A549 (cell line): ENCODE measurements at regions of chr2 and their contacts with region 1.

Region 1: GRCh38 chr2:74440378-74441169 is 1.2 kb downstream of the RTKN start:
- DNase-seq: peak; percentile 85 to 100
- ATAC-seq: peak; percentile 96 to 99
- H3K4me3 ChIP-seq: peak overlapping the region; percentile 53
- H3K27ac ChIP-seq: peak overlapping the region; percentile 86 to 89
- H3K4me1 ChIP-seq: peaks cover 34% of the 10 kb centered on the region
- CTCF ChIP-seq: no peak
- EP300 ChIP-seq: no peak
- POLR2A ChIP-seq: peak; percentile 94
- RAD21 ChIP-seq: no peak

Region 2: DNA sequence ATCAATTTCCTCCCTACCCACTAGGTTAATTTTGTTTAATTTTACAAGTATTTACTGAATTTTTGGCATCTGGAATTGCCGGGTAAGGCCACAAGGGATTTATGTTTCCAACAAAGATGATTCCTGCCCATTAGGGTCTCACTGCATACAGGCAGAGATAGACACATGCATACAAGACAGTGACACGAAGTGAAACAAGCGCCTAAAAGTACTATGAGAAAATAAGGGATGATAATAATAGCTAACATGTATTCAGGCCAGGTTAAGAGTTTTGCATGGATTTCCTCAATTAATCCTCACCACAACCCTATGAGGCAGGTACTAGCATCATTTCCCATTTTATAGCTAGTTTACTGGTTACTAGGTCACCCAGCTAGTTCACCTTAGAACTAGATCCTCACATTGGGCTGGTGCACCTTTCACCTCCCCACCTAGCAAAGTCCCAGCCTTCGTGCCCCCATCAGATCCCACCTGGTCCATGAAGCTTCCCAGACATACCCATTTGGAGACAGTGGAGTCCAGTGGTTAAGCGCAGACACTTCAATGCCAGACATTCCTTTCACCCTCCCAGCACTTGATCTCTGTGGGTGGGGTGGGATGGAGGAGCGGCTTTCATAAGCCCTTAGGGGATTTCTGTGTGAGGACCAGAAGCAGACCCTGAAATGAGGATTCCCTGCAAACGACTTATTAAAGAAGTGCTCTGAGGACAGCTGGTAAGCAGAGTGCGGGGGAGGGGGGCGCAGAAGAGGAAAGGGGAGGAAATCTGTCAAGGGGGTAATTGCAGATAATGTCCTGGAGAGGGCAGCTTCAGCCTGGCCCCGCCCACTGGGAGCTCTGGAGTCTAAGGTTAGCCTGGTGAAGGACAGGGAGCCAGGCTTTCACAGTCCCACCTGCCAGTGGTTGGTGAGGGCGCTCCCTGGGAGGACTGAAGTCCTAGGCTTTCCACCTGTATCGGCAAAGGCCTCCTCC is 519.7 kb before region 1 on chr2:
- CTCF ChIA-PET with region 1: no interaction called
- POLR2A ChIA-PET with region 1: no interaction called
- DNase-seq: peak; percentile 56 to 70
- ATAC-seq: peak; percentile 71 to 87
- H3K4me3 ChIP-seq: no peak overlapping the region
- H3K27ac ChIP-seq: no peak overlapping the region
- H3K4me1 ChIP-seq: peaks cover 2% of the 10 kb centered on the region
- CTCF ChIP-seq: no peak
- EP300 ChIP-seq: no peak
- POLR2A ChIP-seq: no peak
- RAD21 ChIP-seq: peak in 1 of 2 experiments; percentile 16; a peak in 1 of 5 replicates

Region 3: DNA sequence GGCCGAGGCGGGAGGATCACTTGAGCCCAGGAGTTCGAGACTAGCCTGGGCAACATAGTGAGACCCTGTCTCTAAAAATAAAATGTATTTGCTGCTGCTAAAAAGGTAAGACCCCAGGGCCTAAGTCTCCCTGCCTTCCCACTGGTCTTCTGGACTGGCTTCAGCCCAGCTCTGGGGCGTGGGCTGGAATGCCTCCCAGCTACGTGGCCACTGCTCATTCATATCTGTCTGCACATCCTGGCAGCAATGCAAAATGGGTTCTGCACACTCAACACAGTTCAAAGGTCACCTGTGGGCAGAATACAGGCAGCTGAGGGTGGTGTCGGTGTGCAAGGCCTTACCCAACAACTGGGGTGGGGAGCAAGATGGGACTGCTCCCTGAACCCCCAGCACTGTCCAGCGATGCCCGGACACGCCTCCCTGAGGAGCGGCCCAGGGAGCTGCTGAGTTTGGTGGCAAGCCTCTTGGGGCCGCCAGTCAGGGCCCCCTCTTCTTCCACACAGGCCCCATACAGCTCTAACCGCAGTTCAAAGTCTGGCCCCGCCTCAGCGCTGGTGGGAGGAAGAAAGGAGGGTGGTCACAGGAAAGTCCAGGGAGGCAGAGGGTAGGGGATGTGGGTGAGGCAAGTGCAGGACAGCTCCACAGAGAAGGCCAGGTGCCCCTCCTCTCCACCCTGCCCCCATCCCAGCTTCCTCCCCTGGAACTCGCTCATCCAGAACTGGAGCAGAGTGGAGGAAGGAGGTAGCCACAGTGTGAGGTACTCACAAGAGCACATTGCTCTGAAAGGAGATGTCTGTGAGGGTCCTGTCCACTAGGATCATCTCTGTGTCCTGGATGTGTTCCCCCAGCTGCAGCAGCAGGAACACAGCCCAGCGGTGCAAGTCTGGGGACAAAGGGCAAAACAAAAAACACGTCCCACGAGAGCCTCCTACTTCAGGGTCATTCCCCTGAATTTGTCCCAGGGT is 10.8 kb before region 1 on chr2:
- CTCF ChIA-PET with region 1: interaction called, 6 read pairs
- POLR2A ChIA-PET with region 1: interaction called, 11 read pairs
- DNase-seq: no peak
- ATAC-seq: no peak; a peak in 1 of 6 replicates
- H3K4me3 ChIP-seq: no peak overlapping the region
- H3K27ac ChIP-seq: no peak overlapping the region
- H3K4me1 ChIP-seq: peaks cover 8% of the 10 kb centered on the region; the same call in 1 of the 3 replicates
- CTCF ChIP-seq: no peak
- EP300 ChIP-seq: no peak
- POLR2A ChIP-seq: no peak
- RAD21 ChIP-seq: no peak

Region 4: GRCh38 chr2:74488644-74489481 is 48.3 kb after region 1 on chr2:
- CTCF ChIA-PET with region 1: no interaction called
- POLR2A ChIA-PET with region 1: no interaction called
- DNase-seq: no peak
- ATAC-seq: peak; percentile 56 to 59; a peak in 5 of 6 replicates
- H3K4me3 ChIP-seq: no peak overlapping the region
- H3K27ac ChIP-seq: no peak overlapping the region
- H3K4me1 ChIP-seq: peaks cover 4% of the 10 kb centered on the region; the same call in 2 of the 3 replicates
- CTCF ChIP-seq: no peak
- EP300 ChIP-seq: no peak
- POLR2A ChIP-seq: no peak
- RAD21 ChIP-seq: no peak

Region 5: DNA sequence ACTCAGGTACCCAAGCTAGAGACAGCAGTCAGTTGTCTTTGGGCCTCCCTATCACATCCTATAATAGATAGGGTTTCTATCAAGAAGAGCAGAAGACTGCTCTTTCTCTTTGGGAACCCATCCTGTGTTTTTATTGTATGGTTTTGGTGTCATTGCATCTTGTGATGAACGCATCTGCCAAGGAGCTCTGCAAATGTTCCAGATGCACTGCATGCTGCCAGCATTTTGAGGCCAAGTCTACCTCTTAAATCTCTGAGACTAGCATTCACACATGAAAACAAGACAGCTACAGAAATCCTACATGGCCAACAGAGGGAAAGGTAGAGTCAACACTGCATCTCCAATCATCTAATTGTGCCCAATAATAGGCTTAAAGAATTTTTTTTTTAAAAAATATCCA is 227.5 kb after region 1 on chr2:
- CTCF ChIA-PET with region 1: no interaction called
- POLR2A ChIA-PET with region 1: no interaction called
- DNase-seq: no peak
- ATAC-seq: no peak
- H3K4me3 ChIP-seq: no peak overlapping the region
- H3K27ac ChIP-seq: no peak overlapping the region
- H3K4me1 ChIP-seq: no peaks in the 10 kb centered on the region
- CTCF ChIP-seq: no peak
- EP300 ChIP-seq: no peak
- POLR2A ChIP-seq: no peak
- RAD21 ChIP-seq: no peak